CD4-positive, alpha-beta memory T cell (primary cell): ENCODE measurements at regions of chr1 and their contacts with region 1.

Region 1: GRCh38 chr1:167442124-167442848 is 76.0 kb downstream of the CD247 start:
- DNase-seq: peak; percentile 82 to 89 (median 85)
- H3K4me3 ChIP-seq: no peak overlapping the region
- H3K4me3 Mint-ChIP-seq: peak overlapping the region in 5 of 8 donors; percentile 26 to 61 (median 54)
- H3K27ac ChIP-seq: peak overlapping the region; percentile 17
- H3K27ac Mint-ChIP-seq: peak overlapping the region; percentile 75 to 94 (median 88)
- H3K4me1 ChIP-seq: peaks cover 82% of the 10 kb centered on the region
- H3K4me1 Mint-ChIP-seq: peaks cover 61 to 94% (median 76%) of the 10 kb centered on the region in 4 donors
- H3K27me3 ChIP-seq: no peaks in the 10 kb centered on the region
- H3K27me3 Mint-ChIP-seq: no peaks in the 10 kb centered on the region

Region 2: DNA sequence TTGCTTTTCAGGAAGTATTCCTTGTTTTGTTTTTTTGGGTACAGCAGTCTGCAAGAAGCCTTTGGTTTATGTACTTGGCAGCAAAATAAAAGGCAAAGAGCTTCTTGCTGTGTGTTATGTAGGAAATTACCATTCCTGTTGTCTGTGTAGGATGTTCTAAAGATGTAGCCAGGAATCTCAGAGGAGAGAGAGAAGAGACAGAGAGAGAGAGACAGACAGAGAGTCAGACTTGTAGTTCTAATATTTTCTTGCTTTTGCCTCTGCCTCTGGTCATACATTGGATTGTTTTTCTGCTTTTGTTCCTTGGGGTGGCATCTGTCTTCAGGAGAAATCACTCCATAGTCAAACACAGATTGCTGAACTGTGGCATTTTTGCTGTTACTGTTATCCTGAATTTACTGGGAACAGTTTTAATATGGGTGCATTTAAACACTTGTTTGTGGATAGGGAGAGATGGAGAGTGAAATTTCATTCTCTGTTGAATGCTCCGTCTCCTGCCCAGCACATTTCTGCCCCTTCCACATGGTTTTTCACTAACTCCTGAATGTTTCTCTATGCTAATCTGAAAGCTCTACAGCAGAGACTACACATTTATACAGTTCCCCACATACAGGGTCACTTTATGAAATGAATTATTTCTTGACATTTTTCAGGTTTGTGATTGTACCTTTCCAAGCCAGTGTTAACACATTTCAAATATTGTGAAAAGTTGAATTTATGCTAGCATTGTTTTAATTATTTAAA is 171.8 kb before region 1 on chr1:
- CTCF ChIA-PET with region 1: interaction called, 36 read pairs
- POLR2A ChIA-PET with region 1: no interaction called
- intact Hi-C with region 1: loop called (anchors 1 kb)
- DNase-seq: no peak
- H3K4me3 ChIP-seq: no peak overlapping the region
- H3K4me3 Mint-ChIP-seq: no peak overlapping the region
- H3K27ac ChIP-seq: no peak overlapping the region
- H3K27ac Mint-ChIP-seq: peak overlapping the region in 1 of 7 donors; percentile 7
- H3K4me1 ChIP-seq: peaks cover 5% of the 10 kb centered on the region
- H3K4me1 Mint-ChIP-seq: peaks cover 10 to 33% (median 13%) of the 10 kb centered on the region in 4 donors
- H3K27me3 ChIP-seq: no peaks in the 10 kb centered on the region
- H3K27me3 Mint-ChIP-seq: no peaks in the 10 kb centered on the region

Region 3: GRCh38 chr1:167373398-167373797 is 68.9 kb before region 1 on chr1:
- CTCF ChIA-PET with region 1: no interaction called
- POLR2A ChIA-PET with region 1: no interaction called
- intact Hi-C with region 1: no loop called
- DNase-seq: no peak
- H3K4me3 ChIP-seq: no peak overlapping the region
- H3K4me3 Mint-ChIP-seq: no peak overlapping the region
- H3K27ac ChIP-seq: no peak overlapping the region
- H3K27ac Mint-ChIP-seq: no peak overlapping the region
- H3K4me1 ChIP-seq: no peaks in the 10 kb centered on the region
- H3K4me1 Mint-ChIP-seq: peaks cover 0 to 2% (median 0%) of the 10 kb centered on the region in 4 donors
- H3K27me3 ChIP-seq: no peaks in the 10 kb centered on the region
- H3K27me3 Mint-ChIP-seq: no peaks in the 10 kb centered on the region

Region 4: GRCh38 chr1:167388976-167389375 is 53.3 kb before region 1 on chr1:
- CTCF ChIA-PET with region 1: no interaction called
- POLR2A ChIA-PET with region 1: no interaction called
- intact Hi-C with region 1: no loop called
- DNase-seq: no peak
- H3K4me3 ChIP-seq: no peak overlapping the region
- H3K4me3 Mint-ChIP-seq: no peak overlapping the region
- H3K27ac ChIP-seq: no peak overlapping the region
- H3K27ac Mint-ChIP-seq: no peak overlapping the region
- H3K4me1 ChIP-seq: no peaks in the 10 kb centered on the region
- H3K4me1 Mint-ChIP-seq: no peaks in the 10 kb centered on the region
- H3K27me3 ChIP-seq: no peaks in the 10 kb centered on the region
- H3K27me3 Mint-ChIP-seq: no peaks in the 10 kb centered on the region

Region 5: GRCh38 chr1:167418391-167418790 is 23.9 kb before region 1 on chr1:
- CTCF ChIA-PET with region 1: interaction called, 4 read pairs
- POLR2A ChIA-PET with region 1: interaction called, 3 read pairs
- intact Hi-C with region 1: loop called (anchors 2 kb)
- DNase-seq: no peak
- H3K4me3 ChIP-seq: no peak overlapping the region
- H3K4me3 Mint-ChIP-seq: no peak overlapping the region
- H3K27ac ChIP-seq: no peak overlapping the region
- H3K27ac Mint-ChIP-seq: no peak overlapping the region
- H3K4me1 ChIP-seq: no peaks in the 10 kb centered on the region
- H3K4me1 Mint-ChIP-seq: peaks cover 0 to 11% (median 2%) of the 10 kb centered on the region in 4 donors
- H3K27me3 ChIP-seq: no peaks in the 10 kb centered on the region
- H3K27me3 Mint-ChIP-seq: no peaks in the 10 kb centered on the region

Region 6: GRCh38 chr1:167454894-167455785 is 12.9 kb after region 1 on chr1:
- CTCF ChIA-PET with region 1: interaction called, 12 read pairs
- POLR2A ChIA-PET with region 1: interaction called, 48 read pairs
- intact Hi-C with region 1: loop called (anchors 1 kb)
- DNase-seq: peak; percentile 81 to 92 (median 84)
- H3K4me3 ChIP-seq: peak overlapping the region; percentile 29 to 85
- H3K4me3 Mint-ChIP-seq: peak overlapping the region; percentile 70 to 88 (median 86)
- H3K27ac ChIP-seq: peak overlapping the region; percentile 88
- H3K27ac Mint-ChIP-seq: peak overlapping the region; percentile 51 to 98 (median 91)
- H3K4me1 ChIP-seq: peaks cover 83% of the 10 kb centered on the region
- H3K4me1 Mint-ChIP-seq: peaks cover 58 to 82% (median 63%) of the 10 kb centered on the region in 4 donors
- H3K27me3 ChIP-seq: no peaks in the 10 kb centered on the region
- H3K27me3 Mint-ChIP-seq: no peaks in the 10 kb centered on the region

Region 7: GRCh38 chr1:167542109-167543032 is 100.1 kb after region 1 on chr1:
- CTCF ChIA-PET with region 1: interaction called, 10 read pairs
- POLR2A ChIA-PET with region 1: no interaction called
- intact Hi-C with region 1: no loop called
- DNase-seq: no peak
- H3K4me3 ChIP-seq: no peak overlapping the region
- H3K4me3 Mint-ChIP-seq: peak overlapping the region in 1 of 8 donors; percentile 33
- H3K27ac ChIP-seq: no peak overlapping the region
- H3K27ac Mint-ChIP-seq: peak overlapping the region in 5 of 7 donors; percentile 1 to 64 (median 32)
- H3K4me1 ChIP-seq: peaks cover 6% of the 10 kb centered on the region
- H3K4me1 Mint-ChIP-seq: peaks cover 9 to 19% (median 16%) of the 10 kb centered on the region in 4 donors
- H3K27me3 ChIP-seq: no peaks in the 10 kb centered on the region
- H3K27me3 Mint-ChIP-seq: no peaks in the 10 kb centered on the region